ENCODE measurements at regions of chr19 and their contacts with region 1.

Region 1: GRCh38 chr19:39671738-39672363 is 16.1 kb downstream of the LGALS16 start:
- DNase-seq: peak; percentile 54
- H3K4me3 Mint-ChIP-seq: no peak overlapping the region
- H3K27ac Mint-ChIP-seq: no peak overlapping the region
- H3K4me1 Mint-ChIP-seq: peaks cover 32% of the 10 kb centered on the region
- H3K27me3 Mint-ChIP-seq: peaks cover 11% of the 10 kb centered on the region

Region 2: GRCh38 chr19:39341719-39342604 is 329.9 kb before region 1 on chr19 and contains the start of gene SAMD4B:
- CTCF ChIA-PET with region 1: no interaction called
- POLR2A ChIA-PET with region 1: no interaction called
- intact Hi-C with region 1: loop called (anchors 10 kb)
- DNase-seq: peak; percentile 100
- H3K4me3 Mint-ChIP-seq: peak within 1 kb of the TSS; percentile 98
- H3K27ac Mint-ChIP-seq: peak within 1 kb of the TSS; percentile 91
- H3K4me1 Mint-ChIP-seq: peaks cover 65% of the 10 kb centered on the region
- H3K27me3 Mint-ChIP-seq: no peaks in the 10 kb centered on the region
- total RNA-seq, gene SAMD4B: 49.4 to 51.3 TPM

Region 3: DNA sequence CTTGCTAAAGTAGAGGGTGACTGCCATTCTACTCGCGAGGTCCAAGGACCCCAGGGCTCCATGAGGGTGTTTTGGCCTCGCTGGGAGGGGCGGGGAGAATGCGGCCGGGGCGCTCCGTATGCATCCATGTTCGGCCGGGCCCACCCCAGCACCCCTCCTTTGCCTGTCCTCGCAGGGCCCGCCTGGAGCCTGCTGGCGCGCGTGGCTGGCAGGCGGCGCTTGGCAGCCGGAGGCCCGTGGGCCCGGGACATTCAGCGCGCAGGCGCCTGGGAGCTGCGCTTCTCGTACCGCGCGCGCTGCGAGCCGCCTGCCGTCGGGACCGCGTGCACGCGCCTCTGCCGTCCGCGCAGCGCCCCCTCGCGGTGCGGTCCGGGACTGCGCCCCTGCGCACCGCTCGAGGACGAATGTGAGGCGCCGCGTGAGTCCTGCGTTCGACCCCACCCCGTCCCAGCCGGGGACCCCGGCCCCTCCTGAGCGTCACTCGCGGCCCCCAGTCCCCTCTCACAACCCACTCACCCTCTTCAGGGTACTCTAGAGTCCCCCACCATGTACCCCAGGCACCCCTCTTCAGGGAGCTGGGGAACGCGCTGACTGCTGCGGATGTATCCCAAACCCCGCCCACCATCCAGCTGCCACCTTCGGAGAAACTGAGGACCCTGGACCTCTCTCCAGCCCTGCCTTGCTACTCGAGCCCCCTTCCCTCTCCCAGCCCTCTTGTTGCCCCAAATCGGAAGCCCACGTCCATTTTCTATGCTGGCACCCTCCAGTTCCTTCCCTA is 169.0 kb before region 1 on chr19:
- CTCF ChIA-PET with region 1: interaction called, 5 read pairs
- POLR2A ChIA-PET with region 1: no interaction called
- intact Hi-C with region 1: loop called (anchors 2 kb)
- DNase-seq: peak; percentile 84
- H3K4me3 Mint-ChIP-seq: no peak overlapping the region
- H3K27ac Mint-ChIP-seq: no peak overlapping the region
- H3K4me1 Mint-ChIP-seq: peaks cover 33% of the 10 kb centered on the region
- H3K27me3 Mint-ChIP-seq: peaks cover 56% of the 10 kb centered on the region

Region 4: DNA sequence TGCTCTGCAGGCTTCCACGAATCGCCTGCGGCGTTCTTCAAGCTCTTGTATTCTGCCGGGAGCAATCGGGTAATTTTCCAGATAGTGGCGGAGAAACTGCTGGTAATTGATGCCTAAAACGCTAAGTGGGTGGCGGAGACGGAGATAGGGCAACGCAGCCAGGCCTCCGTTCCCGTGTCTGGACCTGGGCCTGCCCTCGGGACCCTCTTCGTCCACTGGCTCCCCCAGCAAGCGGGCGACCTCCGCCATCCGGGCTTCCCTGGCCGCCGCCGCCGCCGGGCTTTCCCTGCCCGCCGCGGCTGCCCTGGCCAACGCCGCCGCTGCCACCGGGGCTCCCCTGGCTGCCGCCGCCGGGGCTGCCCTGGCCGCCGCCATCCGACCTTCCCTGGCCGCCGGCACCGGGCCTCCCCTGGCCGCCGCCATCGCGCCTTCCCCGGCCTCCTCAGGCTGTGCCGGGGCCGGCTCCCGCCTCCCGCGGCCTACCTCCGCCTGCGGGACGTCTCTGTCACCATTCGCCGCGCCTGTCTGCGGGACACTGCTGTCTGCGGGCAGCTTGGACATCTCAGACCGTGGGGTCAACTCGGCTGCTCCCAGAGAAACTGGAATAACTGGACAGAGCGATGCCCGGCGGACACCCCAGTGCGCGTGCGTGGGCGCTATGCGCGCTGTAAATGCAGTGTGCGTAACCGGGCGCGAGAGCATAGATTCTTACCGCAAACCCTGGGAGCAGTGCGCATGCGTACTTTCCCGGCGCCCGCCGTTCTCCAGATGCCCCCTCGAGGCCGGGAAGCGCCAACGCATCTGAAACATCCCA is 132.1 kb before region 1 on chr19 and contains the start of gene EID2:
- CTCF ChIA-PET with region 1: interaction called, 12 read pairs
- POLR2A ChIA-PET with region 1: interaction called, 4 read pairs
- intact Hi-C with region 1: loop called (anchors 5 kb)
- DNase-seq: peak; percentile 98
- H3K4me3 Mint-ChIP-seq: peak within 1 kb of the TSS; percentile 94
- H3K27ac Mint-ChIP-seq: peak within 1 kb of the TSS; percentile 96
- H3K4me1 Mint-ChIP-seq: peaks cover 51% of the 10 kb centered on the region
- H3K27me3 Mint-ChIP-seq: peaks cover 2% of the 10 kb centered on the region
- total RNA-seq, gene EID2: 13.0 to 13.1 TPM

Region 5: GRCh38 chr19:39557441-39558151 is 114.3 kb before region 1 on chr19:
- CTCF ChIA-PET with region 1: interaction called, 137 read pairs
- POLR2A ChIA-PET with region 1: no interaction called
- intact Hi-C with region 1: no loop called
- DNase-seq: no peak
- H3K4me3 Mint-ChIP-seq: peak overlapping the region; percentile 37
- H3K27ac Mint-ChIP-seq: peak overlapping the region; percentile 80
- H3K4me1 Mint-ChIP-seq: peaks cover 26% of the 10 kb centered on the region
- H3K27me3 Mint-ChIP-seq: no peaks in the 10 kb centered on the region

Region 6: GRCh38 chr19:39846176-39846677 is 174.4 kb after region 1 on chr19 and contains the start of gene FBL:
- CTCF ChIA-PET with region 1: interaction called, 42 read pairs
- POLR2A ChIA-PET with region 1: no interaction called
- intact Hi-C with region 1: no loop called
- DNase-seq: peak; percentile 98
- H3K4me3 Mint-ChIP-seq: peak within 1 kb of the TSS; percentile 94
- H3K27ac Mint-ChIP-seq: peak within 1 kb of the TSS; percentile 90
- H3K4me1 Mint-ChIP-seq: peaks cover 45% of the 10 kb centered on the region
- H3K27me3 Mint-ChIP-seq: no peaks in the 10 kb centered on the region
- total RNA-seq, gene FBL: 579 to 589 TPM

Measured in activated CD4-positive, alpha-beta memory T cell treated with anti-CD3 and anti-CD28 coated beads for 36 hours (primary cell).